Activated CD4-positive, alpha-beta T cell treated with anti-CD3 and anti-CD28 coated beads, Interleukin-2, amount 10 ng/mL, durations not matched to agents 7 days and 5 days (primary cell): ENCODE measurements at regions of chr6 and their contacts with region 1.

Region 1: DNA sequence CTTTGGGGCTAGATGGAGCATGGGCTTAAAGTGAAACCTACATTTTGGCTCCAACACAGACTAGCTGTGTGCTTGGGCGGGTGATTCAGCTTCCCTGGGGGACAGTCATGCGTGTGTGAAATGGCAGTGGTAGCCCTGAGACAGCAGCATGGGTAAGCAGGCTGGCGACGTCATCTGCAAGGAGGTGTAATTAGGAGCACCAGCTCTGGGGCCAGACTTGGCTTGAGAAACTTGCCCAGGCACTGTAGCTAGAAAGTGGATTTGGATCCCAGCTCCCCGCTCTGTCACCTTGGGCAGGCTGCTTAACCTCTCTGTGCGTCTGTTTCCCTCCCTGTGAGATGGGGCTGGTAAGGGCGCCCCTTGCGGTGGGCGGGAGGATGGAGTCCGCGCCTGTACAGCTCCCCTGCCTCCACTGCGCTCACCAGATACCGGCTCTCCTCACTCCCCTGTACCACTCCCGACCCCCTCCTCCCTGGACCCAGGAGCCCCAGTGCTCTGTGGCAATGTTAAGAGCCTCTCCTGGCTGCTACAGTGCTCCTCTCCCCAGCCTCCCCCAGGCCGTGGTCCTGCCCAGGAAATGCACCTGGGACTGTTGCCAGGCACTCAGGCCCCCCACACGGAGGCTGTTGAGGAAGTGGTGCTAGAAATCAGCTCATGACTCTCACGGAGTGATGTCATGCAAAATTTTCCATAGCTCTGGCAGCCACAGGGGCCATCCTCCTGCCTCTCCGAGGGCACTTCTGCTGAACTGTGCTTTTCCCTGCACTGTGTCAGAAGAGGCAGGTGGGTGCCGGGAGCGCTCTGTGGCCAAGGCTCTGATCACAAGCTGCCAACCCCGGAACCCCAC is 44.6 kb downstream of the SYNJ2 start:
- DNase-seq: peak; percentile 81
- H3K4me3 Mint-ChIP-seq: peak overlapping the region; percentile 66
- H3K27ac Mint-ChIP-seq: peak overlapping the region; percentile 96
- H3K4me1 Mint-ChIP-seq: peaks cover 47% of the 10 kb centered on the region
- H3K27me3 Mint-ChIP-seq: no peaks in the 10 kb centered on the region

Region 2: GRCh38 chr6:157845493-157846259 is 180.6 kb before region 1 on chr6:
- CTCF ChIA-PET with region 1: no interaction called
- POLR2A ChIA-PET with region 1: no interaction called
- DNase-seq: no peak
- H3K4me3 Mint-ChIP-seq: no peak overlapping the region
- H3K27ac Mint-ChIP-seq: no peak overlapping the region
- H3K4me1 Mint-ChIP-seq: peaks cover 45% of the 10 kb centered on the region
- H3K27me3 Mint-ChIP-seq: no peaks in the 10 kb centered on the region

Region 3: GRCh38 chr6:157928428-157928827 is 97.8 kb before region 1 on chr6:
- CTCF ChIA-PET with region 1: no interaction called
- POLR2A ChIA-PET with region 1: no interaction called
- DNase-seq: no peak
- H3K4me3 Mint-ChIP-seq: no peak overlapping the region
- H3K27ac Mint-ChIP-seq: no peak overlapping the region
- H3K4me1 Mint-ChIP-seq: no peaks in the 10 kb centered on the region
- H3K27me3 Mint-ChIP-seq: no peaks in the 10 kb centered on the region

Region 4: GRCh38 chr6:158002951-158003853 is 23.1 kb before region 1 on chr6:
- CTCF ChIA-PET with region 1: interaction called, 12 read pairs
- POLR2A ChIA-PET with region 1: no interaction called
- DNase-seq: peak; percentile 21
- H3K4me3 Mint-ChIP-seq: no peak overlapping the region
- H3K27ac Mint-ChIP-seq: peak overlapping the region; percentile 20
- H3K4me1 Mint-ChIP-seq: peaks cover 54% of the 10 kb centered on the region
- H3K27me3 Mint-ChIP-seq: no peaks in the 10 kb centered on the region

Region 5: GRCh38 chr6:158009114-158009891 is 17.0 kb before region 1 on chr6:
- CTCF ChIA-PET with region 1: interaction called, 43 read pairs
- POLR2A ChIA-PET with region 1: interaction called, 3 read pairs
- DNase-seq: peak; percentile 31
- H3K4me3 Mint-ChIP-seq: peak overlapping the region; percentile 24
- H3K27ac Mint-ChIP-seq: peak overlapping the region; percentile 84
- H3K4me1 Mint-ChIP-seq: peaks cover 76% of the 10 kb centered on the region
- H3K27me3 Mint-ChIP-seq: no peaks in the 10 kb centered on the region

Region 6: DNA sequence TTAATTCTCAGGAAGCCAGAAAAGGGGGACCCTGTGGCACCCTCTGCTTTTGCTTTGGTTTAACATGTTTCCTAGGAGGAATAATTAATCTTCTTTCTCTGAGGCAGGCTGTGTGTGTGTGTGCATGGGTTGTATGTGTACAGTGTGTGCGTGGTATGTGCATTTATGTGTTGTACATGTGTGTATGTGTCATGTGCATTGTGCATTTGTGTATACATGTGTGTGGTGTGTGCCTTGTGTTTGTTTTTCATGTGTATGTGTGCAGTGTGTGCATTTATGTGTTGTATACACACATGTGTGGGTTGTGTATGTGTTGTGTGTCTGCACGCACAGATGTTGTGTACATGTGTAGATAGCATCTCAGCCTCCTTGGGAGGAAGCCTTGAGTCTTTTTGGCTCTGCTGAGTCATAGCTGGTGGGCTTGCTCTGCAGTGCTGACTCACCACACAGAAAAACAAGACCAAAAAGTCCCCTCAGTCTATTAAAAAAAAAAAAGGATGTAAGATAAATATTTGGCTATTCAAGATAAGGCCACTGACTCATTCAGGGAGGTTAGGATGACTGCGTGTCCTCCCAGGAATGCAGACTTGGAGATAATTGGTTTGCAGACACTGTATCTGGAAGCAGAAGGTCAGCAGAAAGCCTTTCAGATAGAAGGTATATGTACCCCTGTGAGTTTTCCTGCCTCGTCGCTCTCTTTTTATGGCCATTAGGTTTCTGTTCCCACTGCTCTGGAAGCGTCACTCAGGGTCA is 13.9 kb after region 1 on chr6:
- CTCF ChIA-PET with region 1: interaction called, 22 read pairs
- POLR2A ChIA-PET with region 1: interaction called, 4 read pairs
- DNase-seq: no peak
- H3K4me3 Mint-ChIP-seq: no peak overlapping the region
- H3K27ac Mint-ChIP-seq: peak overlapping the region; percentile 51
- H3K4me1 Mint-ChIP-seq: peaks cover 34% of the 10 kb centered on the region
- H3K27me3 Mint-ChIP-seq: no peaks in the 10 kb centered on the region

Region 7: GRCh38 chr6:158047127-158047518 is 20.8 kb after region 1 on chr6:
- CTCF ChIA-PET with region 1: interaction called, 22 read pairs
- POLR2A ChIA-PET with region 1: no interaction called
- DNase-seq: peak; percentile 70
- H3K4me3 Mint-ChIP-seq: no peak overlapping the region
- H3K27ac Mint-ChIP-seq: peak overlapping the region; percentile 79
- H3K4me1 Mint-ChIP-seq: peaks cover 31% of the 10 kb centered on the region
- H3K27me3 Mint-ChIP-seq: no peaks in the 10 kb centered on the region

Region 8: GRCh38 chr6:158072083-158072721 is 45.9 kb after region 1 on chr6:
- CTCF ChIA-PET with region 1: interaction called, 11 read pairs
- POLR2A ChIA-PET with region 1: no interaction called
- DNase-seq: peak; percentile 77
- H3K4me3 Mint-ChIP-seq: no peak overlapping the region
- H3K27ac Mint-ChIP-seq: no peak overlapping the region
- H3K4me1 Mint-ChIP-seq: peaks cover 32% of the 10 kb centered on the region
- H3K27me3 Mint-ChIP-seq: no peaks in the 10 kb centered on the region